ENCODE measurements at regions of chr10 and their contacts with region 1.

Region 1: DNA sequence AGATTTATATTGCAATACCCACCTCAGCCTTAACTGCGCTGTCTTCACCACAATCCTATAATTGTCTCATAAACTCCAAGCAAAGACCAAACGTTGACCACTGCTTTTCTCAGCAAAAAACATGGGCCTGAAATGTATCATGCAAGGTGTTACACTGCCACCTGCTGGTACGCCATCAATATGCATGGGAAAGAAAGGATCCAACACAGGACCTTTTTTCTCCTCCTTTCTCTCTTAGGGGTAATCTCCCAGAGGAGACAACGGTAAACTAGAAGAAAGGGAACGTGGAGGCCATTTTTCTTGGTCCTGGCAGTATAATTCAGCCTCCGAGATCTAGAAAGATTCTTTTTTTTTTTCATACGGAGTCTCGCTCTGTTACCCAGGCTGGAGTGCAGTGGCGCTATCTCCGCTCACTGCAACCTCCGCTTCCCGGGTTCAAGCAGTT is 79.1 kb upstream of the MPP7 start:
- DNase-seq: peak; percentile 40 to 73
- ATAC-seq: peak; percentile 92 to 93
- H3K4me3 ChIP-seq: no peak overlapping the region
- H3K27ac ChIP-seq: peak overlapping the region in 1 of 4 donors; percentile 11
- H3K4me1 ChIP-seq: peaks cover 5 to 13% of the 10 kb centered on the region in 2 donors
- H3K27me3 ChIP-seq: no peaks in the 10 kb centered on the region
- CTCF ChIP-seq: peak; percentile 90 to 93 (median 93)
- POLR2A ChIP-seq: no peak

Region 2: GRCh38 chr10:27558612-27559020 is 823.3 kb before region 1 on chr10:
- in situ Hi-C with region 1: loop called in 1 of 4 experiments (anchors 25 kb)
- intact Hi-C with region 1: no loop called
- DNase-seq: peak; percentile 10 to 36
- ATAC-seq: peak in 1 of 2 donors; percentile 91
- H3K4me3 ChIP-seq: no peak overlapping the region
- H3K27ac ChIP-seq: no peak overlapping the region
- H3K4me1 ChIP-seq: no peaks in the 10 kb centered on the region
- H3K27me3 ChIP-seq: no peaks in the 10 kb centered on the region
- CTCF ChIP-seq: peak; percentile 16 to 62 (median 49)
- POLR2A ChIP-seq: no peak

Region 3: DNA sequence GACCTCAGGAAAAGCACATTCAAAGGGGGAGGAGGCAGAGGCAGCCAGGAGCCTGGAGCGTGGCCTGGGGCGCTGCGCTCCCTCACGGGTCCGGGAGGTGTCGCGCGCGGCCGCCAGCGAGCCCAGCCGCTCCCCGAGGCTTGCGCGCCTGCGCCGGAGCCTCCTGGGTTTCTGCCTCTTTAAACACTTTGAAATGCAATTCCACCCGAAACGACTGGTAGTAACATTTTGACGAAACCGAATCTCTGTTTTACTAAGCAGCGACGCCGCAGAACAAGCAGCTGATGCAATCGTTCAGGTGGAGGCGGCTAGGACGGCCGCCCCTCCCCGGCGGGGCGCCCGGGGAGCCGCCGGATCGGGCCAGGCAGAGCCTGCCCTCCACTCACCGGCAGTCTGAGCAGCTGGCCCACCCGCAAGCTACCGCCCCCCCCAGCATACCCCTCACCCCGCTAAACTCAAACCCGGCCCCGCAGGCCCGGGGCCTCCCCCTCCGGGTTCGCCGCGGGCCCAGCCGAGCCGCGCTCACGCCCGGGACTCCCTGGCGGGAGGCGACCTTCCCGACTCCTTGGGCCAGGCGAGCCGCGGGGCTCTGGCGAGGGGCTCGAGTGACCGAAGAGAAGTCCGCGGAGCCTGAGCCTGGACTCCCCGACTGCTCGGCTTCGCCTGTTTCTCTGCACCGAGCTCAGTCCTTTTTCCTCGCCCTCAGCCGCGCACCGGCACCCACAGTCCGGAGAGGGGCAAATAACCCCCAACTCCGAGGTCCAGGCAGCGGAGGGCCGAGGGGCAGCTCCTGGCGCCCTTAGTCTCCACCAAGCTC is 639.5 kb before region 1 on chr10:
- in situ Hi-C with region 1: loop called in 3 of 4 experiments (anchors 25 kb)
- intact Hi-C with region 1: loop called (anchors 5 kb)
- DNase-seq: peak; percentile 35 to 52
- ATAC-seq: peak; percentile 71 to 78
- H3K4me3 ChIP-seq: peak overlapping the region; percentile 60 to 74 (median 64)
- H3K27ac ChIP-seq: peak overlapping the region in 3 of 4 donors; percentile 5 to 50 (median 19)
- H3K4me1 ChIP-seq: peaks cover 12 to 47% of the 10 kb centered on the region in 2 donors
- H3K27me3 ChIP-seq: peaks cover 55 to 76% (median 72%) of the 10 kb centered on the region in 3 donors
- CTCF ChIP-seq: peak; percentile 50 to 76 (median 64)
- POLR2A ChIP-seq: no peak

Region 4: DNA sequence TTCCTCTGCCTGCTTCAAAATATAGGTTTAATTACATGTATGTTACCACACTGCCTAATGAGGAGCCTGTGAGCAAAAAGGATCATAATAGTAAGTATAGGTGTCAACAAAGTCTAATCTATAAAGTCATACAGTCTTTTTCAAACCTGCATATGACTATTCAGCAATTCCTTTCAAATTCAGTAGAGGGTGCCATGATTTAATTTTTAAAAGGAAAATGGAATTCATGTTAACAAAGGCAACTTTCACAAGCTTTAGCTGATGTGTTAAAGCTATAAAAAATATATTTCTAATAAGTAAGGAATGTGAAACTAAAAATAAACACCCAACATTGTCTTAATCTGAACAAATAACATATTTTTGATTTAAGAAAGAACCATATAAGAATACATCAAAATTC is 131.1 kb before region 1 on chr10:
- in situ Hi-C with region 1: loop called (anchors 5 kb)
- intact Hi-C with region 1: loop called (anchors 1 kb)
- DNase-seq: no peak
- ATAC-seq: peak; percentile 55 to 61
- H3K4me3 ChIP-seq: no peak overlapping the region
- H3K27ac ChIP-seq: no peak overlapping the region
- H3K4me1 ChIP-seq: peaks cover 3 to 15% of the 10 kb centered on the region in 2 donors
- H3K27me3 ChIP-seq: no peaks in the 10 kb centered on the region
- CTCF ChIP-seq: peak; percentile 17 to 68 (median 54)
- POLR2A ChIP-seq: no peak

Region 5: DNA sequence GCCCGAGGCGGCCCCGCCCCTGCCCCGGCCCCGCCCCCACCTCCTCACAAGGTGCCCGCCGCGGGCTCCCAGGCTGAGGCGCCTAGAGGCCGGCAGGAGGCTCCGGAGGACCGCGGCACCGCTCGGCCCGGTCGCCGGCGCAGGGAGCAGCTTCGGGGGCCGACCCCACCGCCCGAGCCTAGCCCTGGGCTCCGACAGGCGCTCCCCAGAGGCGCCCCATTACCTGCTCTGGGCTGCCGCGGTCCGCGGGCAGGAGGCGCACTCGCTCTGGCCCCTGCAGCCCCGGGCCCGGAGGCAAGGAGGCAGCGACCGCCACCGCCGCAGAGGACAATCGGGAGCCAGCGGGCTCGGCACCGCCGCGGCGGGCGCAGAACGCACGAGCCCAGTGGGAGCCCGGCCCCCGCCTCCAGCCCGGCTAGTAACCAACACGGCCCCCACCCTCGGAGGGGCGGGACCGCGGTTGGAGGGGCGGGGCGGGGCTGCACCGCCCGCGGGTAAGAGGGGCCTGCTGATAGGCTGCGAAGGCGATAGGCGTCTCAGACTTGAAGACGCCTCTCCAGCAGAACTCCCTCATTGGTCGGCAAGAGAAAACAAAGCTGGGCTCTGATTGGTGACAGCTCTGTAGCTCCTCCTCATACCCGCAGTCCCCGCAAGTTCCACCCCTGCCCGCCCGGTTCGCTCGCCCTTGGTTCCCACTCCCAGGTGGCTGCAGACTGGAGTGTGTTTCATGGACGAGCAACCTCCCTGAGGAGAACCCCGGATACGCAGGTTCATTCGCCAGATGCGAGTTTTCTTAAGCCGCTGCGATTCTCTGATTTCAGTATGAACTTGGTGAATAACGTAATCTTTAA is 79.1 kb before region 1 on chr10 and contains the start of gene MPP7:
- in situ Hi-C with region 1: loop called in 1 of 4 experiments (anchors 10 kb)
- intact Hi-C with region 1: loop called (anchors 1 kb)
- DNase-seq: peak; percentile 95 to 98
- ATAC-seq: peak; percentile 99 to 100
- H3K4me3 ChIP-seq: peak within 1 kb of the TSS; percentile 71 to 87 (median 82)
- H3K27ac ChIP-seq: peak within 1 kb of the TSS; percentile 81 to 95 (median 91)
- H3K4me1 ChIP-seq: peaks cover 16 to 23% of the 10 kb centered on the region in 2 donors
- H3K27me3 ChIP-seq: no peaks in the 10 kb centered on the region
- CTCF ChIP-seq: peak; percentile 29 to 72 (median 43)
- POLR2A ChIP-seq: peak; percentile 31 to 62
- total RNA-seq, gene MPP7: 3.8 to 10.7 (median 6.4) TPM

Region 6: GRCh38 chr10:28326516-28327490 is 55.1 kb before region 1 on chr10:
- in situ Hi-C with region 1: no loop called
- intact Hi-C with region 1: no loop called
- DNase-seq: peak; percentile 71 to 76
- ATAC-seq: peak; percentile 97
- H3K4me3 ChIP-seq: peak overlapping the region; percentile 26 to 43 (median 36)
- H3K27ac ChIP-seq: peak overlapping the region; percentile 71 to 89 (median 80)
- H3K4me1 ChIP-seq: peaks cover 17 to 20% of the 10 kb centered on the region in 2 donors
- H3K27me3 ChIP-seq: no peaks in the 10 kb centered on the region
- CTCF ChIP-seq: no peak
- POLR2A ChIP-seq: no peak